ENCODE measurements at regions of chr1 and their contacts with region 1.

Region 1: DNA sequence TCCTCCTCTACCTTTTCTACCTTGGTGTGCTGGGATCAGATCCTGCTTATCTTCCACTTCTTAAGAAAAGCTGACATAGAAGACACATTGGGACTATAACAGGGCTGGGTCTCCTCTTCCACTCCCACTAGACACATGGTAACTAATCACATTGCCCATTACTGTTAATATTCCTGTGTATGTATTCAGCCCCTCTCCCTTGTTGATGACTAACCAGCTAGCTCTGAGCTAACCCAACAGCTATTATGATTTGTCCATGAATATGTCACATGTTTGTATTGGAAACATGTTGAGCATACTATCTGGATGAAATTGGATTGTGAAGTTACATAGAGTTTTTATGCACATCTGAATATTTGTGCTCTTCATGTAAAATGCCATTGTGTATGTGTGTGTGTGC is 52.9 kb downstream of the MPZL1 start:
- DNase-seq: peak; percentile 72
- ATAC-seq: peak; percentile 47
- H3K4me3 ChIP-seq: no peak overlapping the region
- H3K27ac ChIP-seq: no peak overlapping the region
- H3K4me1 ChIP-seq: peaks cover 8% of the 10 kb centered on the region
- H3K27me3 ChIP-seq: no peaks in the 10 kb centered on the region
- CTCF ChIP-seq: no peak
- POLR2A ChIP-seq: no peak
- RAD21 ChIP-seq: no peak

Region 2: GRCh38 chr1:167387251-167387910 is 387.3 kb before region 1 on chr1:
- CTCF ChIA-PET with region 1: no interaction called
- POLR2A ChIA-PET with region 1: no interaction called
- dilution Hi-C with region 1: no loop called
- in situ Hi-C with region 1: no loop called
- intact Hi-C with region 1: no loop called
- DNase-seq: no peak
- ATAC-seq: no peak
- H3K4me3 ChIP-seq: no peak overlapping the region
- H3K27ac ChIP-seq: no peak overlapping the region
- H3K4me1 ChIP-seq: no peaks in the 10 kb centered on the region
- H3K27me3 ChIP-seq: no peaks in the 10 kb centered on the region
- CTCF ChIP-seq: no peak
- POLR2A ChIP-seq: no peak
- RAD21 ChIP-seq: no peak

Region 3: GRCh38 chr1:167676205-167676915 is 98.3 kb before region 1 on chr1:
- CTCF ChIA-PET with region 1: no interaction called
- POLR2A ChIA-PET with region 1: no interaction called
- dilution Hi-C with region 1: no loop called
- in situ Hi-C with region 1: no loop called
- intact Hi-C with region 1: no loop called
- DNase-seq: no peak
- ATAC-seq: no peak
- H3K4me3 ChIP-seq: no peak overlapping the region
- H3K27ac ChIP-seq: no peak overlapping the region
- H3K4me1 ChIP-seq: no peaks in the 10 kb centered on the region
- H3K27me3 ChIP-seq: peaks cover 30% of the 10 kb centered on the region
- CTCF ChIP-seq: no peak
- POLR2A ChIP-seq: no peak
- RAD21 ChIP-seq: no peak

Region 4: GRCh38 chr1:167728818-167729410 is 45.8 kb before region 1 on chr1:
- CTCF ChIA-PET with region 1: no interaction called
- POLR2A ChIA-PET with region 1: no interaction called
- dilution Hi-C with region 1: no loop called
- in situ Hi-C with region 1: no loop called
- intact Hi-C with region 1: loop called (anchors 5 kb)
- DNase-seq: no peak
- ATAC-seq: no peak
- H3K4me3 ChIP-seq: no peak overlapping the region
- H3K27ac ChIP-seq: no peak overlapping the region
- H3K4me1 ChIP-seq: peaks cover 7% of the 10 kb centered on the region
- H3K27me3 ChIP-seq: no peaks in the 10 kb centered on the region
- CTCF ChIP-seq: no peak
- POLR2A ChIP-seq: no peak
- RAD21 ChIP-seq: no peak

Measured in IMR-90 (cell line).